HEK293 (cell line): ENCODE measurements at regions of chr14 and their contacts with region 1.

Region 1: DNA sequence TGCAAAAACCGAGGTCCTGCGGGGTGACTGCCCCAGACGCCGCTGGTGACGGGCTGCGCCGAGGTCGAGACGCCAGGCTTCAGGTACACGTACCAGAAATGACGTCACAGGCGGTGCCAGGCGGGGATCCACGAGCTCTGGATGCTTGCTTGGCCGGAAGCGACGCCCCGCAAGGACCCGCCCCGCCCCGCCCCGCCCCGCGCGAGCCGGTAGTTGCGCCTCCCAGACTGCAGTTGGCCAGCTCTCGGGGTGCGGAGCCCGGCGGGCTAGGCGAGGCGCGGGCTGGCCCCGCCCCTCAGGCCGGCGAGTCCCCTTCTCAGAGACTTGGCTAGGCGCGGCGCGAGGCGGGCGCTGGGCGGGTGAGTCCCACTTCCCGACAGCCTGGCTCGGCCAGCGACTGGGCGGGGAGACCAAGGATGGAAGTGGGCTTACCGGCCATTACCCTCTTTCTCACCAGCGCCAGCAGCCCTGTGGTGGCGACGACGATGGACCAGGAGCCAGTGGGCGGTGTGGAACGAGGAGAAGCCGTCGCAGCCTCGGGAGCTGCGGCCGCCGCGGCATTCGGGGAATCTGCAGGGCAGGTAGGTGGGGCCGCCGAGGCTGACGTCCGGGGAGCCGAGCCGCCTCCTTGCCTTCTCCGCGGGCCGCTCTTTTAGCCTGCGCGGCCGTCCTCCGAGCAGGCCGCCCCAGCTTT is at the start of gene FAM177A1:
- H3K4me3 ChIP-seq: peak within 1 kb of the TSS; percentile 92
- H3K27ac ChIP-seq: peak within 1 kb of the TSS; percentile 90
- H3K4me1 ChIP-seq: peaks cover 3% of the 10 kb centered on the region; the same call in 1 of the 2 replicates
- CTCF ChIP-seq: peak; percentile 62

Region 2: DNA sequence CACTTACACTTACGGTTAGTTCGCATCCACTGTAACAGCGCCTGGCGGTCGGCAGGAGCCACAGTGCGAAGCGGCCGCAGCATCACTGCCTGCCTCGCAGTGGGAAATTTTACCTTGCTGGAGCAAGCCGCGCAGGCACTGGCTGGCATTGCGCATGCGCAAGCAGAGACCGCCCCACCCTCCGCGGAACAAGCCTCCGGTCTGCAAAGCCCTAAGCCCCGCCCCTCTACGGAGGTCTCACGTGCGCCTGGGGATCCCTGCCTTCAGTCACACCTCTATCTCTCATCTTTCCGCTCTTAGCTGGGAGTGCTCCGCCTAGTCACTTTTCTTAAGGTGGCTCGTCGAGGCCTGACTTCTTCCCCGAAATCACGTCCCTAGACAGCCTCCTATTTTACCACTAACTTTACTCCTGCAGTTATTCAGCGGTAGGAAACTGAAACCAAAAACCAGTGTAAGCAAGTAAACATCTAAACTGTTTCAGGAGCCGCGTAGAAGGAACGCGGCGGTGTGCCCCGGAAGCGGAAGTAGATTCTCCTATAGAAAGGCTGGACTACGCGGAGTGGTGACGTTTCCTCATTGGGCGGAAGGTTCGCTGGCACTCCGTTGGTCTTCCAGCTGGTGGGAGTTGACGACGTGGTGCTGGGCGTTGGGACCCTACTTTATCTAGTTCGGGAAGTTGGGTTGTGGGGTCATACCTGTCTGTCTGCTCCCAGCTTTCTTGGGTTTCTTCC is 63.6 kb before region 1 on chr14 and contains the start of gene SRP54:
- CTCF ChIA-PET with region 1: no interaction called
- POLR2A ChIA-PET with region 1: interaction called, 11 read pairs
- H3K4me3 ChIP-seq: peak within 1 kb of the TSS; percentile 82
- H3K27ac ChIP-seq: peak within 1 kb of the TSS; percentile 75
- H3K4me1 ChIP-seq: peaks cover 3% of the 10 kb centered on the region
- CTCF ChIP-seq: no peak; the same call in 1 of the 2 replicates